Pancreas (tissue), 10 donors: ENCODE measurements at regions of chr3 and their contacts with region 1.

Region 1: GRCh38 chr3:66276705-66277274 is 56.0 kb downstream of the SLC25A26 start:
- DNase-seq: peak in 3 of 6 donors; percentile 53 to 72 (median 59)
- ATAC-seq: peak; percentile 73 to 96 (median 88)
- H3K4me3 ChIP-seq: no peak overlapping the region
- H3K27ac ChIP-seq: no peak overlapping the region
- H3K4me1 ChIP-seq: peaks cover 0 to 3% (median 0%) of the 10 kb centered on the region in 3 donors
- H3K27me3 ChIP-seq: no peaks in the 10 kb centered on the region
- CTCF ChIP-seq: peak in 3 of 4 donors; percentile 37 to 52 (median 46)

Region 2: GRCh38 chr3:66372681-66373350 is 96.0 kb after region 1 on chr3:
- intact Hi-C with region 1: loop called in 1 of 3 experiments (anchors 10 kb)
- DNase-seq: peak; percentile 47 to 83 (median 70)
- ATAC-seq: peak; percentile 56 to 88 (median 83)
- H3K4me3 ChIP-seq: no peak overlapping the region
- H3K27ac ChIP-seq: no peak overlapping the region
- H3K4me1 ChIP-seq: peaks cover 0 to 22% (median 9%) of the 10 kb centered on the region in 3 donors
- H3K27me3 ChIP-seq: no peaks in the 10 kb centered on the region
- CTCF ChIP-seq: peak in 2 of 4 donors; percentile 13 to 23

Region 3: GRCh38 chr3:66836363-66837152 is 559.8 kb after region 1 on chr3:
- intact Hi-C with region 1: loop called in 1 of 3 experiments (anchors 10 kb)
- DNase-seq: no peak
- ATAC-seq: peak; percentile 66 to 89 (median 81)
- H3K4me3 ChIP-seq: no peak overlapping the region
- H3K27ac ChIP-seq: no peak overlapping the region
- H3K4me1 ChIP-seq: peaks cover 0 to 10% (median 1%) of the 10 kb centered on the region in 3 donors
- H3K27me3 ChIP-seq: no peaks in the 10 kb centered on the region
- CTCF ChIP-seq: peak in 2 of 4 donors; percentile 9 to 24